ENCODE measurements at regions of chr5 and their contacts with region 1.

Region 1: DNA sequence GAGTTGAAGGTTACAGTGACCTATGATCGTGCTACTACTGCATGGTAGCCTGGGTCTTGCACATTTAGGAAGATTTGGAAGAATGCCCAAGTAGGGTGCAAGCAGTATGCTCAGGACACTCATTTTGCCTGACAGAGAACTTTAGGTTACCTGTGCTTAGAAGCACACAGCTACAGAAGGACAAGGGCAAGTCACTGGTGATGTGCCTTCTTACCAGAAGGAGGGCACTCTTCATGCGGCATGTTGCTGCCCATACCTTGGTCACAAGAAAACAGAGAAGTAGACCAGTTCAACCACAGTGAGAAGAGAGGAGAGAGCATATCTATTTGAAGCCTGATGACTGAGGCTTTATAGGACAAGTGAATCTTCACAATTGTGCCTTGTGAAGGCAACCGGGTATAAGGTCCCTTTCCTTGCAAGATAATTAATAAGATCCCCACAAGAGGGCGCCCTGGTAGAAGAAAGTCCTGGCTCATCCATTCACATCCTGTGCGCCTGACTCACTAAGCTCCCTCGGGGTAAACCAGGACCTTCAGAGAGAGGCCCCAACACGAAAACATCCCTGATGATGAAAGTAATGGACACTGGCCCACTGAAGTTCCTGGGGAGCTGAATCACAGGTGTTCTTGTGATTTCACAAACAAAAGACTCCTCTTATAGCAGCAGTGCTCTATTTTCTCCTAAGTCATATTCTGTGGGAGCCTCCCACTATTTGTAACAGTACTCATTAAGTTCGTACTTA is 38.1 kb upstream of the STARD4 start:
- DNase-seq: peak; percentile 54
- H3K4me3 Mint-ChIP-seq: no peak overlapping the region
- H3K27ac Mint-ChIP-seq: peak overlapping the region; percentile 29
- H3K4me1 Mint-ChIP-seq: peaks cover 31% of the 10 kb centered on the region
- H3K27me3 Mint-ChIP-seq: peaks cover 2% of the 10 kb centered on the region

Region 2: DNA sequence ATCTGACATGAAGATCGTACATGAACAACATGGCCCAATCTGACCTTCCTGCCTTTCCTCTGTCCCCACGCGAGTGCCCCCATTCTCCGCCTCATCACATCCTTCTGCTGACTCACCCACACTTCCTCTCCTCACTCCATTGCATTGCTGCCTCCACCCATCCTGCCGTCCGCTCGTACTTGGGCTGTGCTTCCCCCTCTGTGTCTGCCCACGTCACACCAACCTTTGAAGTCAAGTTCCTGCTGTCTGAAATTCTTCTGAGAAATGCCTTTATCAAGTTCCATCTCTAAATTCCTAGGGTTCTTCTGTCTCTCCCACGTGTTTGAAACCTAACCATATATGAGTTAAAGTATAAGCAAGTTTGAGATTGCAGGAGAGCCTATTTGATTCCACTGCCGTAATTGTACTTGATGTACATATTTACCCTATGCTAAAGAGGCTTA is 20.1 kb before region 1 on chr5:
- intact Hi-C with region 1: loop called (anchors 2 kb)
- DNase-seq: peak; percentile 80
- H3K4me3 Mint-ChIP-seq: peak overlapping the region; percentile 46
- H3K27ac Mint-ChIP-seq: peak overlapping the region; percentile 87
- H3K4me1 Mint-ChIP-seq: peaks cover 35% of the 10 kb centered on the region
- H3K27me3 Mint-ChIP-seq: no peaks in the 10 kb centered on the region

Region 3: GRCh38 chr5:111584651-111585050 is 34.2 kb after region 1 on chr5:
- intact Hi-C with region 1: loop called (anchors 1 kb)
- DNase-seq: no peak
- H3K4me3 Mint-ChIP-seq: no peak overlapping the region
- H3K27ac Mint-ChIP-seq: peak overlapping the region; percentile 77
- H3K4me1 Mint-ChIP-seq: peaks cover 50% of the 10 kb centered on the region
- H3K27me3 Mint-ChIP-seq: no peaks in the 10 kb centered on the region

Region 4: DNA sequence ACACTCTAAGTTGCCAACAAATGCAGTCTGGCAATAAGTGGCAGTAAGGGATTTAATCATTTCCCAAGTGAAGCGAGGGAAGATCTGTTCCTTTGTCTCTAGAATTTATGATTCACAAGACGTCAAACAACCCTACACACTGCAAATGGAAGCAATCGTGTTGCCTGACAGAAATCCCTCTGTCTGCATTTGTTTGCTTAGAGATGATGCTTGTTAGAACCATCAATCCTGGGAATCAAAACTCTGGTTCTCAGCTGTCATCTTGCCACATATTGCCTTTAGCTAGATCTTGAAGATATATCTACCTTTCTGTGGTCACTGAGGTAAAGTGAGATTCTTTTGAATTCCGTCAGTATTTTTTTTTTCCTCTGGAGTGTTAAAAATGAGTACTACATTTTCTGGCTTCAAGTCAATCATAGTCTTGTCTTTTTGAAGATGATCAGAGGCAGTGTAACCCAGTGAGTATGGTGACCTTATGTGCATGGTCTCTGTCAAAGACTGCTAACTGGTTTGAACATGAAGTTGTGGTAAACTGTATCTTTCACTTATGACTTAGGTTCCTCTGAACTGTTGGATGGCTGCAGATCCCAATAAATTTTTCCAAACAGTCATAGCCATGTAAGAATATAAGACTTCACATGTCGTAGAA is 68.3 kb after region 1 on chr5:
- intact Hi-C with region 1: loop called (anchors 2 kb)
- DNase-seq: no peak
- H3K4me3 Mint-ChIP-seq: no peak overlapping the region
- H3K27ac Mint-ChIP-seq: peak overlapping the region; percentile 51
- H3K4me1 Mint-ChIP-seq: peaks cover 14% of the 10 kb centered on the region
- H3K27me3 Mint-ChIP-seq: peaks cover 16% of the 10 kb centered on the region

Region 5: GRCh38 chr5:111628901-111629300 is 78.5 kb after region 1 on chr5:
- intact Hi-C with region 1: loop called (anchors 2 kb)
- DNase-seq: no peak
- H3K4me3 Mint-ChIP-seq: no peak overlapping the region
- H3K27ac Mint-ChIP-seq: no peak overlapping the region
- H3K4me1 Mint-ChIP-seq: peaks cover 17% of the 10 kb centered on the region
- H3K27me3 Mint-ChIP-seq: no peaks in the 10 kb centered on the region

Region 6: GRCh38 chr5:111697881-111698757 is 147.7 kb after region 1 on chr5:
- intact Hi-C with region 1: loop called (anchors 5 kb)
- DNase-seq: no peak
- H3K4me3 Mint-ChIP-seq: no peak overlapping the region
- H3K27ac Mint-ChIP-seq: no peak overlapping the region
- H3K4me1 Mint-ChIP-seq: peaks cover 7% of the 10 kb centered on the region
- H3K27me3 Mint-ChIP-seq: peaks cover 11% of the 10 kb centered on the region

Region 7: GRCh38 chr5:112146323-112147226 is 596.1 kb after region 1 on chr5:
- intact Hi-C with region 1: loop called (anchors 1 kb)
- DNase-seq: peak; percentile 20
- H3K4me3 Mint-ChIP-seq: no peak overlapping the region
- H3K27ac Mint-ChIP-seq: no peak overlapping the region
- H3K4me1 Mint-ChIP-seq: no peaks in the 10 kb centered on the region
- H3K27me3 Mint-ChIP-seq: peaks cover 12% of the 10 kb centered on the region